Heart left ventricle (tissue), 16 donors: ENCODE measurements at regions of chr4 and their contacts with region 1.

Region 1: DNA sequence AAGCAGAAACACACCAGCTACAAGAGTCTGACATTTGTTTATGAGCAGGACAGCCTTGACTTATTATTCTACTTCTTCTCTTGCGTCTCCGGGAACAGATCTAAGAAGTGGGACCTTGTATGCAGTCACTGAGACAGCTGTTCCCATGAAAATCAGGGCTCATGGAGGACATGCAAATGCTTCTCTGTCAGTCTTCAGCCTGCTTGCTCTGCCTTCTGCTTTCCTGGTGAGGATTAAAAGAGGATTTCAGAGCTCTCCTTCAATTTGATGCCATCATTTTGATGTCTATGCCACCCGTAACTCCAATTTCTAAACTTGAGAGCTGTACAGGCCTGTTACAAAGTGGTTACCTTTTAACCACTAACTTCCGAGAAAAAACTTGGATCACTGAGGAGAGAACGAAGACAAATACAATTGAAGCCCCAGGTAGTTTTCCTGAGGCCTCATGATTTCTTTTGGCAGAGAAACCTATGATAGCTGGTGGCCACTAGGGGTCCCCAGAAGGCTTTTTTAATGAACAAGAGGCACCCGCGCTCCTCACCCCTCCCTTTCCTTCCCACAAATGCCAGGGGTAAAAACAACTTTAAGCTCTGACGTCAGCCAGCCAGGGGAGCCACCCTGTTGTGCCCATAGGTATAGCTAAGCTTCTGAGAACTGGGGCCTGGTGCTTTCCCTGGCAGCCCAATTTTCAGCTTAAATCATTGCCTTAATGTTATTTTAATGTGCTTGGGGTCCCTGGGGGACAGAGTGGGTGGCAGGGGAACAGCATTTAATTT is 97.0 kb downstream of the DDIT4L start:
- DNase-seq: peak; percentile 63 to 87 (median 80)
- ATAC-seq: peak; percentile 75 to 96 (median 94)
- H3K4me3 ChIP-seq: no peak overlapping the region
- H3K27ac ChIP-seq: peak overlapping the region in 7 of 12 donors; percentile 1 to 53 (median 23)
- H3K4me1 ChIP-seq: peaks cover 0 to 28% (median 11%) of the 10 kb centered on the region in 12 donors
- H3K27me3 ChIP-seq: no peaks in the 10 kb centered on the region
- CTCF ChIP-seq: peak; percentile 70 to 93 (median 83)
- POLR2A ChIP-seq: no peak

Region 2: DNA sequence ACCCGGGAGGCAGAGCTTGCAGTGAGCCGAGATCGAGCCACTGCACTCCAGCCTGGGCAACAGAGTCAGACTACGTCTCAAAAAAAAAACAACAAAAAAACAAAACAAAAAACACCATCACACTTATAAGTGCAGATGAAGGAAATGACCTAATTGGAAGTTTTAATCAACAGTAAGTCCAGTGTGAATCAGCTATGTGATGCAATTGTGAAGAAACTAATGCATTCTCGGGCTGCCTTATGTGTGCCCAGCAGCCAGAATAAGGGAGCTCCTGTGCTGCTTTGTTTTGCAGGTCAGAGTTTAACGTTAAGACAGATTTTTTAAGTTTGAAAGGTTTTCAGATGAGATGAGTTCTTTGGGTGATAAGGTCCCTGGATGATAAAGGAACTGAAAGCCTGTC is 265.8 kb before region 1 on chr4:
- intact Hi-C with region 1: no loop called
- DNase-seq: no peak
- ATAC-seq: no peak
- H3K4me3 ChIP-seq: no peak overlapping the region
- H3K27ac ChIP-seq: no peak overlapping the region
- H3K4me1 ChIP-seq: peaks cover 0 to 17% (median 0%) of the 10 kb centered on the region in 12 donors
- H3K27me3 ChIP-seq: no peaks in the 10 kb centered on the region
- CTCF ChIP-seq: no peak
- POLR2A ChIP-seq: no peak

Region 3: GRCh38 chr4:99998062-99998867 is 95.0 kb before region 1 on chr4:
- intact Hi-C with region 1: loop called in 1 of 10 experiments (anchors 10 kb)
- DNase-seq: no peak
- ATAC-seq: no peak
- H3K4me3 ChIP-seq: no peak overlapping the region
- H3K27ac ChIP-seq: no peak overlapping the region
- H3K4me1 ChIP-seq: no peaks in the 10 kb centered on the region
- H3K27me3 ChIP-seq: no peaks in the 10 kb centered on the region
- CTCF ChIP-seq: peak in 8 of 12 donors; percentile 0 to 46 (median 34)
- POLR2A ChIP-seq: no peak

Region 4: DNA sequence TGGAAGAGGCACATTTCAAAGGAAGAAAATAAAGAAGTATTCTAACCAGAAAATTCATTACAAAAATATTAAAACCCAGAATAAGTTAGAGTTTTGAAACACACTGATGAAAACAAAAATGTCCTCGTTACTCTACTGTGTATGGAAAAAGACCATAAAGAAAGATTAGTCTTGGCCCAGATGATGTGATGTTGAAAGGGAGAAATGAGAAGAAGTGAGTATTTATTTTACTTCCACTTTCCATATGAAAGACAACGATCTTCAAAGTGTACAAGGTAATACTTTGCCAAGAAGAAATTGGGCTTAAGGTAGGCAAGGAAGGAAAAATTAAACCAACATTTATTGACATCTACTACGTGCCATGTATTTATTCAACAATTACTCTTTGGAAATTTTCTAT is 473.1 kb after region 1 on chr4:
- intact Hi-C with region 1: no loop called
- DNase-seq: no peak
- ATAC-seq: no peak
- H3K4me3 ChIP-seq: no peak overlapping the region
- H3K27ac ChIP-seq: no peak overlapping the region
- H3K4me1 ChIP-seq: no peaks in the 10 kb centered on the region
- H3K27me3 ChIP-seq: no peaks in the 10 kb centered on the region
- CTCF ChIP-seq: no peak
- POLR2A ChIP-seq: no peak